ENCODE measurements at regions of chr9 and their contacts with region 1.

Region 1: DNA sequence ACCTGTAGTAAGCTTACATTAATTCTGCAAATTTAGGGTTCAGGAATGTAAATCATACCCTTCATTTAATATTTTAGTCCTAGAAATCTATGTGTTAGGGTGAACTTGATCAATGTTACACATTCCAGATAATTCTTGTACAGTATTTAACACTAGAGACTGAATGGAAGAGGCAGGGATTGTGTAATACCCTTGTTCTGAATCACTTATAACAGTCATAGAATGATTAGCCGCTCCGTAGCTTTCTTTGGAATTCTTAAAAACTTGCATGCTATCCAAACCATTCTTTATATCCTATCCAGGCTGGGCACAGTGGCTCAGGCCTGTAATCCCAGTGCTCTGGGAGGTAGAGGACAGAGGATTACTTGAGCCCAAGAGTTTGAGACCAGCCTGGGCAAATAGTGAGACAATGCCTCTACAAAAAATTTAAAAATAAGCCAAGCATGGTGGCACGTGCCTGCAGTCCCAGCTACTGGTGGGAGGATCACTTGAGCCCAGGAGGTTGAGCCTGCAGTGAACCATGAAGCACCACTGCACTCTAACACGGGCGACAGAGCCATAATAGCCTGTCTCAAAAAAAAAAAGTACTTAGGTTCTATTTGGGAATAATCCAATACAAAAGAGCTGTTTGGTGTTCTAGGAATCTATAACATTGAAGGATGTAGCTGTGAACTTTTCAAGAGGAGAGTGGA is 8.3 kb downstream of the ZNF483 start:
- DNase-seq: no peak
- H3K4me3 ChIP-seq: no peak overlapping the region
- H3K27ac ChIP-seq: no peak overlapping the region
- H3K4me1 ChIP-seq: no peaks in the 10 kb centered on the region
- CTCF ChIP-seq: no peak

Region 2: DNA sequence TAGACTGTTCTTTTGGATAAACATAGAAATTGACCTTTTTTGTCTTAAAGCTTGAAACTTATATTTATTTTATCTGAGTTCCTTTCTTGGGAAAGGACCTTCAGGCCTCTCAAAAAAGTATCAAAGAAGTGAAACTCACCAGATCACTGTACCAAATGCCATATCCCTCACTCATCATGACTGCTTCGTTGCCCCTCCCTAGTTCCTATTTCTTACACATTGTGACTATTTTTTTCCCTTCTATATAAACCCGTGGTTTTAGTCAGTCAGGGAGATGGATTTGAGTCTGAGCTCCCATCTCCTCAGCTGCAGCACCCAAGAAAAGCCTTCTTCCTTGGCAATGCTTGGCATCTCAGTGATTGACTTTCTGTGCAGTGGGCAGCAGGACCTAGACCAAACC is 624.4 kb before region 1 on chr9:
- CTCF ChIA-PET with region 1: no interaction called
- POLR2A ChIA-PET with region 1: interaction called, 10 read pairs
- intact Hi-C with region 1: no loop called
- DNase-seq: no peak
- H3K4me3 ChIP-seq: no peak overlapping the region
- H3K27ac ChIP-seq: no peak overlapping the region
- H3K4me1 ChIP-seq: no peaks in the 10 kb centered on the region
- CTCF ChIP-seq: no peak

Region 3: DNA sequence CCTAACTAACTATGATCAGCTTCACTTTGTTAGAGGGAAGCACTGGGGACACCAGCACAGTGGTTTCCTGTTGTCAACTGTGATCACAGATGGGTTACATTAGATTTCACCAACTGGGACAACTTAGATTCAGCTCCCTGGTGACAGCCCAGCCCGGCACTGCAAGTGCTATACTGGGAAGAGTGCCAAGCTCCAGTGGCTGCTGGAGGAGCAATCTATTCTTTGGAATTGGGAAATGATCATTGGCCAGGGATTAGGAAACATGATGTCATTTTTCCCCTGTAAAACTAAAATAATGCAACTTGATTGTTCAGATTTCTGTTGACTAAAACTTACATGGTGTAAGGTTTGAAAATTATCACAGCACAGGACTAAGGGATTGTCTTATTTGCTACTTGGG is 33.0 kb after region 1 on chr9:
- CTCF ChIA-PET with region 1: no interaction called
- POLR2A ChIA-PET with region 1: no interaction called
- intact Hi-C with region 1: no loop called
- DNase-seq: no peak
- H3K4me3 ChIP-seq: no peak overlapping the region
- H3K27ac ChIP-seq: no peak overlapping the region
- H3K4me1 ChIP-seq: no peaks in the 10 kb centered on the region
- CTCF ChIP-seq: no peak

Region 4: DNA sequence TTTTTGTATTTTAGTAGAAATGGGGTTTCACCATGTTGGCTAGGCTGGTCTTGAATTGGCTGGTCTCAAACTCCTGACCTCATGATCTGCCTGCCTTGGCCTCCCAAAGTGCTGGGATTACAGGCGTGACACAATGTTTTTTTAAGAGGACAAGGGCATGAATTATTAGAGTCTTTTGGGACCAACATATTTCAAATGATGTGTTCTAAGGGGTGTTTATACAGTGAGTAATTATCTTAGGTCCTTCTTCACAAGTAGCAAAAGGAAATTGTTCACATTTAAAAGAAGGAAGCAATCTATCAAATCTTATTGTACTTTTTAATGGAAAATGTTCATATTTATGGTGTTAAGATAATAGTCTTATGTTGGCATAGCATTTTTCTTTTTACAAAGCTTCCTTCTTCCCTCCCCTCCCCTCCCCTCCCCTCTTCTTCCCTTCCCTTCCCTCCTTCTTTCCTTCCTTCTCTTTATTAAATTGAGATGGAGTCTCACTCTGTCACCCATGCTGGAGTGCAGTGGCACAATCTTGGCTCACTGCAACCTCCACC is 134.9 kb after region 1 on chr9:
- CTCF ChIA-PET with region 1: no interaction called
- POLR2A ChIA-PET with region 1: no interaction called
- intact Hi-C with region 1: no loop called
- DNase-seq: no peak
- H3K4me3 ChIP-seq: no peak overlapping the region
- H3K27ac ChIP-seq: no peak overlapping the region
- H3K4me1 ChIP-seq: peaks cover 3% of the 10 kb centered on the region
- CTCF ChIP-seq: no peak